ENCODE measurements at regions of chr10 and their contacts with region 1.

Region 1: DNA sequence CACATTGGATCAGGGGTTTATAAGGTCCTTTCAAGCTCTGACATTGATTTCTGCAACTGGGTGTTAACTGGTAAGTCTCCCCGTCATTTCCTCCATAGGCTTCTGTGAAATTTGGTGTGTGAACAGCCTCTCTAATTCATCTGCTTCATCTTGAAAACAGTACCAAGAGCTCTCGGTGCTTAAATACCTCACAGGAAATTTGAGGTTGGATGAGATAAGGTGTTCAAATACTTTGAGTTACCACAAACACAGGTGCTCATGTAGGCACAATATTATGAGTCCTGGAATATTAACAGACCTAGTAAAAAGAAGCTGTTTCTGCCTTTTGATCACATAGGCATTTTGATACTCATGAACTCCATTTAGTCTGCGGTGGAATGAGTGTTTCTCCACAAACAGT is 85.2 kb downstream of the RTKN2 start:
- DNase-seq: peak; percentile 40
- H3K4me3 Mint-ChIP-seq: no peak overlapping the region
- H3K27ac Mint-ChIP-seq: peak overlapping the region; percentile 96
- H3K4me1 Mint-ChIP-seq: peaks cover 85% of the 10 kb centered on the region
- H3K27me3 Mint-ChIP-seq: no peaks in the 10 kb centered on the region

Region 2: GRCh38 chr10:61903221-61903927 is 280.1 kb before region 1 on chr10:
- CTCF ChIA-PET with region 1: interaction called, 3 read pairs
- POLR2A ChIA-PET with region 1: interaction called, 10 read pairs
- intact Hi-C with region 1: loop called (anchors 1 kb)
- DNase-seq: peak; percentile 84
- H3K4me3 Mint-ChIP-seq: peak overlapping the region; percentile 90
- H3K27ac Mint-ChIP-seq: peak overlapping the region; percentile 95
- H3K4me1 Mint-ChIP-seq: peaks cover 45% of the 10 kb centered on the region
- H3K27me3 Mint-ChIP-seq: no peaks in the 10 kb centered on the region

Region 3: GRCh38 chr10:61992671-61993668 is 190.5 kb before region 1 on chr10:
- CTCF ChIA-PET with region 1: no interaction called
- POLR2A ChIA-PET with region 1: interaction called, 14 read pairs
- intact Hi-C with region 1: loop called (anchors 1 kb)
- DNase-seq: peak; percentile 75
- H3K4me3 Mint-ChIP-seq: peak overlapping the region; percentile 57
- H3K27ac Mint-ChIP-seq: peak overlapping the region; percentile 99
- H3K4me1 Mint-ChIP-seq: peaks cover 85% of the 10 kb centered on the region
- H3K27me3 Mint-ChIP-seq: no peaks in the 10 kb centered on the region

Region 4: GRCh38 chr10:62121187-62121530 is 62.3 kb before region 1 on chr10:
- CTCF ChIA-PET with region 1: no interaction called
- POLR2A ChIA-PET with region 1: interaction called, 3 read pairs
- intact Hi-C with region 1: loop called (anchors 1 kb)
- DNase-seq: no peak
- H3K4me3 Mint-ChIP-seq: no peak overlapping the region
- H3K27ac Mint-ChIP-seq: peak overlapping the region; percentile 59
- H3K4me1 Mint-ChIP-seq: peaks cover 31% of the 10 kb centered on the region
- H3K27me3 Mint-ChIP-seq: no peaks in the 10 kb centered on the region

Region 5: DNA sequence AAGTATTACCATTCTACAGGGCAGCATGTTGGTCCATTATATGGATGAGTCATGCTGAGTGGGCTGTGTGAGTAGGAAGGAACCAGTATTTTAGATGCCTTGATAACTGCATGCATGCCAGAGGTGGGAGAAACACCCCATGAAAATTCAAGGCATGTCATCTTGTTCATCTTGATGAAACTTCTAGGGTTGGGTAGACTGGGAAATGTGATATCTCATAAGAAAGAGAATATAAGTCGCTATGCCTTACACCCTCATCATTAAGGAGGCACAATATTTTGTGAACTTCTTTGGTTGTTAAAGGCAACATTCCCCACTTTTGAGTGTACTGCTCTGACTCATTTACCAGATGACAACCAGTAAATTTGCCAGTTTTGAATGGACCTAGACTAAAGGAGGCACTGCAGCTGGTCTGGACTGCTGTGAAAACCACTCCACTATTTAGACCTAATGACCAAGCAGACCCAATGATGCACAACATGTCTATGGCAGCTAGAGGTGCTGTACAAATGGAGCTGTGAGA is 238.7 kb after region 1 on chr10:
- CTCF ChIA-PET with region 1: no interaction called
- POLR2A ChIA-PET with region 1: no interaction called
- intact Hi-C with region 1: loop called (anchors 5 kb)
- DNase-seq: no peak
- H3K4me3 Mint-ChIP-seq: no peak overlapping the region
- H3K27ac Mint-ChIP-seq: no peak overlapping the region
- H3K4me1 Mint-ChIP-seq: peaks cover 29% of the 10 kb centered on the region
- H3K27me3 Mint-ChIP-seq: peaks cover 2% of the 10 kb centered on the region

Region 6: DNA sequence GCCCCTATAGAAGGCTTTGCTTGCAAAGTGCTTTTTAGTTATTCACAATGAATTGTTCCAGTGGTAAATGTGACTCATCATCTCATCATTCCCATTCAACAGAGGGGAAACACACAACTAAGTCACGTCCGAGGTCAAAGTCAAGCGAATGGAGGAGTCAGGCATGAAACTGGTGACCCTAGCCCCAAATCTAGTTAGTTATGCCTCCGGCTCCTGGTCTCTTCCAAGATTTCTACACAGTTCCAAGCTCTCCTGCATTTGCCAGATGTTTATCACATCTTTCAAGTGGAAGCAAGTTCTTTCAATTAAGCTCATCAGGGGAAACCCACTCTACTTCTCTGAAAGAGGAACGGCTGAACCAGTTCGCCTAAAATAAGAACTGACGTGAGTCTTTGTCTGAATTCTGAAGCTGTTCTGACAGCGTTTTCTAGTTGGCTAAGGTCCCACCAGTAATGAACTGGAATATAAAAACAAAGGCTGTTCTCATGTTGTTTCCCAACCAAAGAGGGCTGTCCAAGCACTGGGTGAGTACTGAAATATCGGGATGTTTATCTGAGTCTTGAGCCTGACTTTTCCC is 808.8 kb after region 1 on chr10:
- CTCF ChIA-PET with region 1: no interaction called
- POLR2A ChIA-PET with region 1: no interaction called
- intact Hi-C with region 1: loop called (anchors 5 kb)
- DNase-seq: peak; percentile 20
- H3K4me3 Mint-ChIP-seq: peak overlapping the region; percentile 24
- H3K27ac Mint-ChIP-seq: peak overlapping the region; percentile 84
- H3K4me1 Mint-ChIP-seq: peaks cover 54% of the 10 kb centered on the region
- H3K27me3 Mint-ChIP-seq: peaks cover 7% of the 10 kb centered on the region

Measured in activated CD4-positive, alpha-beta memory T cell treated with anti-CD3 and anti-CD28 coated beads for 36 hours (primary cell).